Dorsolateral prefrontal cortex (tissue), 120 donors: ENCODE measurements at regions of chr12 and their contacts with region 1.

Region 1: GRCh38 chr12:132356691-132357622 is 27.6 kb upstream of the GALNT9 start:
- DNase-seq: peak; percentile 45 to 89 (median 80)
- H3K4me3 ChIP-seq: peak overlapping the region in 6 of 59 donors; percentile 1 to 33 (median 18)
- H3K27ac ChIP-seq: peak overlapping the region in 48 of 59 donors; percentile 9 to 86 (median 58)
- H3K27me3 ChIP-seq: peaks cover 0 to 15% (median 0%) of the 10 kb centered on the region in 45 donors
- CTCF ChIP-seq: no peak

Region 2: GRCh38 chr12:132327351-132328171 is 29.4 kb before region 1 on chr12:
- intact Hi-C with region 1: loop called in 1 of 2 experiments (anchors 2 kb)
- DNase-seq: peak in 9 of 10 donors; percentile 51 to 86 (median 77)
- H3K4me3 ChIP-seq: peak overlapping the region in 57 of 59 donors; percentile 26 to 73 (median 57)
- H3K27ac ChIP-seq: peak overlapping the region in 46 of 59 donors; percentile 16 to 93 (median 70)
- H3K27me3 ChIP-seq: peaks cover 0 to 62% (median 16%) of the 10 kb centered on the region in 45 donors
- CTCF ChIP-seq: no peak

Region 3: DNA sequence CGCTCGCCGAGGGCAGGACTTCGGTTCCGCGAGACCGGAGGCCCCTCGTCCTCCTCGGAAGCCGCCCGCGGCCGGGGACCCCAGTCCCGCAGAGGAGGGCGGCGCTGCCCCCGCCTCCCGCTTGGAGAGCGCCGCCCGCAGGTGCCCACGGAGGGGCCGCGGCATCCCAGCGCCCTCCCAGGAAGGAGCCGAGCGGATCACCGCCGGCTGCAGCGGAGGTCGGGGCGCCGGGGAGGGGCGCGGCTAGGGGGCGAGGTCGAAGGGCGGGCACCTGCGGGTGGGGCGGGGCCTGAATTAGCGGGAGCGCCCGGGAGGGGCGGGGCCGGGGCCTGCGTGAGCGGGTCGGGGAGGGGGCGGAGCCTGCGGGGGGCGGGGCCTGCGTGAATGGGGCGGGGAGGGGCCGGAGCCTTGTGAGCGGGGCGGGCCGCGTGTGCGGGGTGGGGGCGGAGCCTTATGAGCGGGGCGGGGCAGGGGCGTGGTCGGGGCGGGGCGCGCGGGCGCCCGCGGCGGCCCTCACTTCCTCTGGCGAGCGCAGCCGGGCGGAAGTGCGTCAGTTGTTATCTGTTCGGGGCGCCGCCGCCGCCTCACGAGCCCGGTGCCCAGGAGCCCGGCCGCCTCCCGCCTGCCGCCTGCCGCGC is 132.8 kb after region 1 on chr12 and contains the start of gene FBRSL1:
- intact Hi-C with region 1: no loop called
- DNase-seq: peak; percentile 83 to 90 (median 88)
- H3K4me3 ChIP-seq: peak within 1 kb of the TSS; percentile 55 to 86 (median 76)
- H3K27ac ChIP-seq: peak within 1 kb of the TSS in 55 of 59 donors; percentile 20 to 89 (median 78)
- H3K27me3 ChIP-seq: no peaks in the 10 kb centered on the region
- CTCF ChIP-seq: no peak
- total RNA-seq, gene FBRSL1: 41.4 to 125 (median 65.3) TPM